T-cell (primary cell): ENCODE measurements at regions of chr6 and their contacts with region 1.

Region 1: GRCh38 chr6:105733565-105734162 is 330.8 kb upstream of the PREP start:
- DNase-seq: peak in 1 of 35 experiments; percentile 65
- ATAC-seq: no peak
- H3K4me3 ChIP-seq: no peak overlapping the region
- H3K4me3 Mint-ChIP-seq: no peak overlapping the region
- H3K27ac ChIP-seq: no peak overlapping the region
- H3K27ac Mint-ChIP-seq: no peak overlapping the region
- H3K4me1 ChIP-seq: no peaks in the 10 kb centered on the region
- H3K4me1 Mint-ChIP-seq: peaks cover 7 to 9% (median 8%) of the 10 kb centered on the region in 3 donors
- H3K27me3 ChIP-seq: no peaks in the 10 kb centered on the region
- H3K27me3 Mint-ChIP-seq: no peaks in the 10 kb centered on the region

Region 2: DNA sequence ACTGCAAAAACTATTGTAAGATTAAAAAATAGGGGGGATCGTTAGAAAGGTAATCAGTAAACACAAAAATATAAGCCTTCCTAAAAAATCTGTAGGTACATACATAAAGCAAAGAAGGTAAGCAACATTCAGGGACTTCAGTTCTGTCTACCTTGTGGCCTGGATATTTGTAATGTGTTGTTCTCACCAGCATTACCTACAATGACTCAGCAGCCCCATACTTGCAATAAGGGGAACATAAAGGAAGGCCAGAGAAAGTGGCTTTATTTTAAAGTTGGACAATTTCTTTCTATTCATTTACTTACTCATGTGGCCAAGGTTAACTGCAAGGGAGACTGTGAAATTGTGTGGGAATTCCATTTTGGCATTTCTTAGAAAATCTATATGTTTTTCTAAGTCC is 53.5 kb before region 1 on chr6:
- CTCF ChIA-PET with region 1: no interaction called
- POLR2A ChIA-PET with region 1: no interaction called
- DNase-seq: no peak
- ATAC-seq: no peak
- H3K4me3 ChIP-seq: no peak overlapping the region
- H3K4me3 Mint-ChIP-seq: no peak overlapping the region
- H3K27ac ChIP-seq: no peak overlapping the region
- H3K27ac Mint-ChIP-seq: no peak overlapping the region
- H3K4me1 ChIP-seq: peaks cover 0 to 4% of the 10 kb centered on the region in 2 experiments
- H3K4me1 Mint-ChIP-seq: no peaks in the 10 kb centered on the region
- H3K27me3 ChIP-seq: no peaks in the 10 kb centered on the region
- H3K27me3 Mint-ChIP-seq: no peaks in the 10 kb centered on the region

Region 3: DNA sequence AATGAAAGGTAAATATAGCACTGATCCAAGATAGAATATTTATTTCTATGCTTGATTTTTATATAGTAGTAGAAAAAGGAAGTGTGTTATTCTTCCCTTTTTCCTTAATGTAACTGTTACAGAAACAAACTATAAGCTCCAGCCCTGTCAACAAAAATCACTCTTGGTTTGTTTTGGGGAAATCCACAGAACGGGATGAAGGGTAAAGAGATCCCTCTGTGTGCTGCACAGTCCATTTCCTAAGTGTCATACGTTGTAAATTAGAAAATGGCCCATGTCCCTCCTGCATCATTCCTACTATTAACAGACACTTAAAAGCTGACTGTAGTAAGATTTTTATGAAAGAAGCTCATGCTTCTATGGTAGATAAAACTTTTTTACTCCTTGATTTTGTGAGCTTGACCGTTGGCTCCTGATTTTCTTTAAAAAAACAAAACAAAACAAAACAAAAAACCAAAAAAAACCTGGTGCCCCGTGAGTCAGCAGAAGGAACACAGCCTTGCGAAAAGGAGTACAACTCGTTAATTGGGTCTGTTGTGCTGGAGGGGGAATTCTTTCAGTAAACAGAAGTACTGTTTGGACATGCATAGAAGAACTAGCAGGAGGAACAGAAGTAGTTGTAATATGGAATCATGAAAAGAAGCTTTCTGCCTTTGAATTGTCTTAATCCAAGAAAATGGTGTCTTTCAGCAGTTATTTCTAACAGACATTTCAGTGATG is 828.2 kb after region 1 on chr6:
- CTCF ChIA-PET with region 1: interaction called in 1 of 2 experiments, 10 read pairs
- POLR2A ChIA-PET with region 1: no interaction called
- DNase-seq: no peak
- ATAC-seq: no peak
- H3K4me3 ChIP-seq: no peak overlapping the region
- H3K4me3 Mint-ChIP-seq: no peak overlapping the region
- H3K27ac ChIP-seq: no peak overlapping the region
- H3K27ac Mint-ChIP-seq: peak overlapping the region; percentile 57 to 63
- H3K4me1 ChIP-seq: no peaks in the 10 kb centered on the region
- H3K4me1 Mint-ChIP-seq: peaks cover 0 to 6% (median 4%) of the 10 kb centered on the region in 3 donors
- H3K27me3 ChIP-seq: no peaks in the 10 kb centered on the region
- H3K27me3 Mint-ChIP-seq: no peaks in the 10 kb centered on the region